Right ventricle myocardium inferior (tissue), 1 donor: ENCODE measurements at regions of chr17 and their contacts with region 1.

Region 1: DNA sequence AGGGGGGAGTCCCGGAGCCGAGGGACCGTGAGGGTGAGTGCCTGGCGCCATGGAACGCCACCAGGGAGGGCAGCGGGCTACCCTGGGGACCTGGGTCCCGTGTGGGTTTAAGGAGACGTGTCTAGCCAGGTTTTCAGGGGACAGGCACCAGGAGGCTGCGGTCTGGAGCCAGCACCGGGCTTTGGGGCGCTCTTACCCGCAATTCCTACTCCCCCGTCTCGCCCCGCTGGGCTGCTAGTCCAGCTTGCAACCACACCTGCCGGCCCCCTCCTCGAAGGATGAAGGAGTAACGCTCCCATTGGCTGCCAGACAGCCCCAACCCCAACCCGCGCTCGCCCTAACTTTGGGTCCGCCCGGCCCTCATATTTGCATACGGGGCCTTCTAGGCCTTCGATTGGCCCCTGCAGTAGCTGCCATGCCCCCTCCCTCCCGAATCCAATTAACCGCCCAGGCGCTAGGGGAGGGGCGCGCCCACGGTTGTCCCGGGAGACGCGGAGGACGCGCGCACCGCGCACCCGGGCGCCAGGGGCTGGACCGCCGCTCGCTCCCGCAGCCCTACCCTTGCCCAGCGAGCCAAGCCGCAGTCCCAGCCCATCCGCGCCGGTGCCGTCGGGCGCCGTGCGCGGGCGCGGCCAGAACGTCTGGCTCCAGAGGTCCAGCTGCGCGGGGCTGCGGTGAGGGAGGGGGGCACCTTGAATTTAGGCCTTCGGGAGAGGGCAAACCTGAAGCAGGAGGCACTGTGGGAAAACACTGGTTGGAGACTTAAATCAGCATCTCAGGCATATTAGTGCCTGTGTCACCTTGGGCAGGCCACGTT is at the start of gene TTLL6:
- DNase-seq: peak; percentile 86
- ATAC-seq: peak; percentile 99
- total RNA-seq, gene TTLL6: 0.08 TPM

Region 2: DNA sequence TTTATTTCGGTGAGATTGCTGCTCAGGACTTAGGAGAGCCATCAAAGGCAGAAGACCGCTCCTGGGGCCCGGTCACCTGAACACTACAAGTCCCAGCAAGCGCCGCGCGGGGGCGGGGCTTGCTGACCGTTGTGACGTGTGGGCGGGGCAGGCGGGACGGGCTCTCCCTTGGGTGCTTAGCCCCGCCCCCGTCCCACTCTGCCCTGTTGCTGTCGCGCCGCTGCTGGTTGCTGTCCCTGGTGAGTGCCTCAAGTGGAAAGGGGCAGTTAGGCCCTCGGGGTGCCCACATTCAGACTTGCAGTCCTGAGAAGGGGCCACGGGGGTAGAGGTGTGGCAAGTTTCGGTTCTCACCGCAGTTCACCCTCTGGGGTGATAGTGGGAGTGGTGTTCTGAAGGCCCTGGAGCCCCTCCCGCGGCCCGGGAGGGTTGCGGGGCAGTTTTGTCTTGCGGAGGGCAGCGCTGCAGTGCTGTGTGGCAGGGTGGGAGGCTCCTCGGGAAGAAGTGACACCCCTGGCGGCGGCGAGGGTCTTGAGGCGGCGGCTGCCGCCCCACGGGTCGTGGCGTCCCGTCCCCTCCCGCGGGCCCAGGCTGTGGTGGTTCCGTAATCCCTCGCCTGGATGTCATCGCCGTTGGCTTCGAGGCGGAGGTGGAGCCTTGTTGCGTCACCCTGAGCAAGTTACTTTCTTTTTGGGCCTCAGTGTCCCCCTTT is 14.0 kb after region 1 on chr17 and contains the start of gene CALCOCO2:
- intact Hi-C with region 1: loop called (anchors 2 kb)
- DNase-seq: peak; percentile 99
- ATAC-seq: peak; percentile 96
- total RNA-seq, gene CALCOCO2: 321 TPM

Region 3: DNA sequence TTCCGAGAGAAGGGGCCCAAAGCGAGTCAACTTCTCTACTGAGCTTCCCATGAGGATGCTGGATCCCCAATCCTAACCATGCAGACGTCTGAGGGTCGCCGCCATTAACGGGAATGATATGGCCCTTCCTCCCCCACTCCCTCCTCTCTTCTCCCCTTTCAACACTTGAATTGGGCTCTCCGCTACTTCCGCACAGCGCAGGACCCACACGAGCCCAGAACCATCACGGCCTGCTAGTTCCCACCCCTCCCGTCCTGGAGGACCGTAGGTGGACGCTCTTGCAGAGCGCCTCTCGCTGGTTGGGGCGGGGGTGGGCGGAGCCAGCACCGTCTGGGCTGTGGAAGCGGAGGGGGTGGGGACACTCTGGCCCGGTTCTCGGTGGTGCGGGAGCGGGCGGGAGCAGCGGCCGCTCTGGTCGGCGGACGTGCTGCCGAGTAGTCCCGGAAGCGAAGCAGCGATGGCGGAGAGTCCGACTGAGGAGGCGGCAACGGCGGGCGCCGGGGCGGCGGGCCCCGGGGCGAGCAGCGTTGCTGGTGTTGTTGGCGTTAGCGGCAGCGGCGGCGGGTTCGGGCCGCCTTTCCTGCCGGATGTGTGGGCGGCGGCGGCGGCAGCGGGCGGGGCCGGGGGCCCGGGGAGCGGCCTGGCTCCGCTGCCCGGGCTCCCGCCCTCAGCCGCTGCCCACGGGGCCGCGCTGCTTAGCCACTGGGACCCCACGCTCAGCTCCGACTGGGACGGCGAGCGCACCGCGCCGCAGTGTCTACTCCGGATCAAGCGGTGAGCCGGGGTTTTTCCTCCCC is 91.3 kb after region 1 on chr17 and contains the start of gene UBE2Z:
- intact Hi-C with region 1: no loop called
- DNase-seq: peak; percentile 95
- ATAC-seq: peak; percentile 98
- total RNA-seq, gene UBE2Z: 37.4 TPM